ENCODE measurements at regions of chr1 and their contacts with region 1.

Region 1: GRCh38 chr1:160251687-160252526 is 10.4 kb downstream of the DCAF8 start:
- DNase-seq: peak; percentile 63
- ATAC-seq: peak; percentile 99
- H3K4me3 Mint-ChIP-seq: no peak overlapping the region
- H3K27ac Mint-ChIP-seq: peak overlapping the region; percentile 91
- H3K4me1 Mint-ChIP-seq: peaks cover 6% of the 10 kb centered on the region
- H3K27me3 Mint-ChIP-seq: no peaks in the 10 kb centered on the region
- CTCF ChIP-seq: peak; percentile 37; the same call in 1 of the 2 replicates

Region 2: GRCh38 chr1:160058087-160058486 is 193.8 kb before region 1 on chr1:
- CTCF ChIA-PET with region 1: interaction called, 14 read pairs
- POLR2A ChIA-PET with region 1: no interaction called
- DNase-seq: no peak
- ATAC-seq: peak; percentile 53
- H3K4me3 Mint-ChIP-seq: no peak overlapping the region
- H3K27ac Mint-ChIP-seq: no peak overlapping the region
- H3K4me1 Mint-ChIP-seq: peaks cover 18% of the 10 kb centered on the region
- H3K27me3 Mint-ChIP-seq: peaks cover 7% of the 10 kb centered on the region
- CTCF ChIP-seq: no peak

Region 3: DNA sequence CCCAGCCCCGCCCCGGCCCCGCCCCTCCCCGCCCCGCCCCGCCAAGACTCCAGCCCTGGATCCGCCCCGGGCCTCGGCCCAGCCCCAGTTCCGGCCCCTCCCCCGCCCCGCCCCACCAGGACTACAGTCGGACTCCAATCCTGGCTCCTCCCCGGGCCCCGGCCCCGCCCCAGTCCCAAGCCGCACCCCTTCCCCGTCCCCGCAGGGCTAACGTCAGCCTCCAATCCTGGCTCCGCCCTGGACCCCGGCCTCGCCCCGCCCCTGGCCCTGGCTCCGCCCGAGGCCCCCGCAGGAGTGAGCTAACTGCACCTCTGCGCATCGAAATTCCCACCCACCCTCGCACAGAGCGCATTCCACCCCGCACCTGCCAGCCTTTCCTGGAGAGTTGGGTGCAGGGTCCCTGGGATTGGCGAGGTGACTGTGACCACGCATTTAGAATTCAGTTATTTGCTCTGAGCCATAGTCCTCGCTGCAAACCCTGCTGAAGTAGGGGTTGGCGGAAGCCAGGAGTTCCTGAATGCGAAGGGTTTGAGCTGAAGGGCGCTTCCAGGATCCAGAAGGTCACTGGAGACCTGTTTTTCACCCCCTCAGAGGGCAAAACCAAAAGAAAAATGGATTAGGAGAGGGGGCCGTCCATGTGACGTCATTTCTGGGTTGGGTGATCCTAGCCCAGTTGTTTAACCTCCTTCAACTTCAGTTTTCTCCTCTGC is 152.9 kb before region 1 on chr1:
- CTCF ChIA-PET with region 1: interaction called, 109 read pairs
- POLR2A ChIA-PET with region 1: interaction called, 6 read pairs
- DNase-seq: peak; percentile 99
- ATAC-seq: peak; percentile 78
- H3K4me3 Mint-ChIP-seq: peak overlapping the region; percentile 69
- H3K27ac Mint-ChIP-seq: peak overlapping the region; percentile 88
- H3K4me1 Mint-ChIP-seq: peaks cover 71% of the 10 kb centered on the region
- H3K27me3 Mint-ChIP-seq: peaks cover 5% of the 10 kb centered on the region; the same call in 1 of the 2 replicates
- CTCF ChIP-seq: no peak

Region 4: GRCh38 chr1:160161965-160162705 is 89.8 kb before region 1 on chr1:
- CTCF ChIA-PET with region 1: interaction called, 61 read pairs
- POLR2A ChIA-PET with region 1: no interaction called
- DNase-seq: peak; percentile 78
- ATAC-seq: peak; percentile 98
- H3K4me3 Mint-ChIP-seq: no peak overlapping the region
- H3K27ac Mint-ChIP-seq: no peak overlapping the region
- H3K4me1 Mint-ChIP-seq: peaks cover 20% of the 10 kb centered on the region
- H3K27me3 Mint-ChIP-seq: peaks cover 14% of the 10 kb centered on the region
- CTCF ChIP-seq: peak; percentile 59

Region 5: DNA sequence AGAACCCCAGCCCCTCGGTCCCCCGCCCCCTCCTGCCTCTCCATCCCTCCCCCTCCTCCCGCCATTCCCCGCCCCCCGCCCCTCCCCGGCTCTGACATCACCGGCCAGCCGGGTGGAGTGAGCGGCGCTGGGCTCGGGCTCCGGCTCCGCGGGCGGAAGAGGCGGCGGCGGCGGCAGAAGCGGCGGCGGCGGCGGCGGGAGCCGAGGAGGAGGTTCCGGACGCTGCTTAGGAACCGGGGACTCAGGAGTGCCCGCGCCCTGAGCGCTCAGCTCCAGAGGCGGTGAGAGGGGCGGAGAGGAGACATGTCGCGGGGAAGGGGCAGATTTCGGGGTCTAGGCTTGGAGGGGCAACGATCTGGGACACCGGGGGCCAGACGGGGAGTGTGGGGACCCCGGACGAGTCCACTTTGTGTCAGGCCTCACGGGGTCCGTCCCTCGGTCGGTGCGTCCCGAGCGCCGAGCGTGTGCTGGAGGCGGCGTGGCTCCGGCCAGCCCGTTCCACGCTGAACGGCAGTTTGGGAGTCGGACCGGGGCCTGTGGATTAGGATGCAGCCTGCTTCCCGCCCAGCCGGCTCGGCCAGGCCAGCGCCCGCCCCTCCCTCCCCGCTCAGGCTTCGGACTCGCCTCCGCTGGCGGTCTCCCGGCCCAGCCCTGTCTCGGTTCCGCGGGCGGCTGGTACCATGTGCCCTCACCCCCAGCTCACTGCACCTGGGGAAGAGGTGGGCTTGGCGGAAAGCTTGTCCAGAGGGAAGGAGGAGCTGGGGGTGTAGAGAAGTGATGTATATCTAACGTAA is 46.5 kb before region 1 on chr1 and contains the start of gene PEA15:
- CTCF ChIA-PET with region 1: interaction called, 11 read pairs
- POLR2A ChIA-PET with region 1: no interaction called
- DNase-seq: peak; percentile 81
- ATAC-seq: peak; percentile 56
- H3K4me3 Mint-ChIP-seq: peak within 1 kb of the TSS; percentile 77
- H3K27ac Mint-ChIP-seq: no peak within 1 kb of the TSS
- H3K4me1 Mint-ChIP-seq: peaks cover 55% of the 10 kb centered on the region
- H3K27me3 Mint-ChIP-seq: no peaks in the 10 kb centered on the region; the same call in 1 of the 2 replicates
- CTCF ChIP-seq: no peak
- total RNA-seq, gene PEA15: 43.6 to 56.3 TPM (median 46.9 TPM) in 3 replicates

Region 6: GRCh38 chr1:160232911-160233310 is 19.0 kb before region 1 on chr1:
- CTCF ChIA-PET with region 1: interaction called, 29 read pairs
- POLR2A ChIA-PET with region 1: interaction called, 3 read pairs
- DNase-seq: no peak
- ATAC-seq: no peak
- H3K4me3 Mint-ChIP-seq: no peak overlapping the region
- H3K27ac Mint-ChIP-seq: no peak overlapping the region
- H3K4me1 Mint-ChIP-seq: peaks cover 11% of the 10 kb centered on the region
- H3K27me3 Mint-ChIP-seq: no peaks in the 10 kb centered on the region
- CTCF ChIP-seq: no peak

Region 7: GRCh38 chr1:160291248-160292220 is 39.6 kb after region 1 on chr1:
- CTCF ChIA-PET with region 1: interaction called, 43 read pairs
- POLR2A ChIA-PET with region 1: interaction called, 3 read pairs
- DNase-seq: peak; percentile 61
- ATAC-seq: peak; percentile 95
- H3K4me3 Mint-ChIP-seq: no peak overlapping the region
- H3K27ac Mint-ChIP-seq: no peak overlapping the region
- H3K4me1 Mint-ChIP-seq: peaks cover 2% of the 10 kb centered on the region
- H3K27me3 Mint-ChIP-seq: no peaks in the 10 kb centered on the region
- CTCF ChIP-seq: peak; percentile 66

Region 8: GRCh38 chr1:161733526-161733925 is 1481.6 kb after region 1 on chr1:
- CTCF ChIA-PET with region 1: no interaction called
- POLR2A ChIA-PET with region 1: no interaction called
- DNase-seq: no peak
- ATAC-seq: no peak
- H3K4me3 Mint-ChIP-seq: no peak overlapping the region
- H3K27ac Mint-ChIP-seq: no peak overlapping the region
- H3K4me1 Mint-ChIP-seq: peaks cover 48% of the 10 kb centered on the region
- H3K27me3 Mint-ChIP-seq: peaks cover 10% of the 10 kb centered on the region
- CTCF ChIP-seq: no peak